OCI-LY7 (cell line): ENCODE measurements at regions of chr5 and their contacts with region 1.

Region 1: GRCh38 chr5:37005946-37006540 is 129.5 kb downstream of the NIPBL start:
- DNase-seq: peak; percentile 43
- H3K4me3 ChIP-seq: no peak overlapping the region
- H3K27ac ChIP-seq: no peak overlapping the region
- H3K4me1 ChIP-seq: no peaks in the 10 kb centered on the region
- CTCF ChIP-seq: peak; percentile 94

Region 2: DNA sequence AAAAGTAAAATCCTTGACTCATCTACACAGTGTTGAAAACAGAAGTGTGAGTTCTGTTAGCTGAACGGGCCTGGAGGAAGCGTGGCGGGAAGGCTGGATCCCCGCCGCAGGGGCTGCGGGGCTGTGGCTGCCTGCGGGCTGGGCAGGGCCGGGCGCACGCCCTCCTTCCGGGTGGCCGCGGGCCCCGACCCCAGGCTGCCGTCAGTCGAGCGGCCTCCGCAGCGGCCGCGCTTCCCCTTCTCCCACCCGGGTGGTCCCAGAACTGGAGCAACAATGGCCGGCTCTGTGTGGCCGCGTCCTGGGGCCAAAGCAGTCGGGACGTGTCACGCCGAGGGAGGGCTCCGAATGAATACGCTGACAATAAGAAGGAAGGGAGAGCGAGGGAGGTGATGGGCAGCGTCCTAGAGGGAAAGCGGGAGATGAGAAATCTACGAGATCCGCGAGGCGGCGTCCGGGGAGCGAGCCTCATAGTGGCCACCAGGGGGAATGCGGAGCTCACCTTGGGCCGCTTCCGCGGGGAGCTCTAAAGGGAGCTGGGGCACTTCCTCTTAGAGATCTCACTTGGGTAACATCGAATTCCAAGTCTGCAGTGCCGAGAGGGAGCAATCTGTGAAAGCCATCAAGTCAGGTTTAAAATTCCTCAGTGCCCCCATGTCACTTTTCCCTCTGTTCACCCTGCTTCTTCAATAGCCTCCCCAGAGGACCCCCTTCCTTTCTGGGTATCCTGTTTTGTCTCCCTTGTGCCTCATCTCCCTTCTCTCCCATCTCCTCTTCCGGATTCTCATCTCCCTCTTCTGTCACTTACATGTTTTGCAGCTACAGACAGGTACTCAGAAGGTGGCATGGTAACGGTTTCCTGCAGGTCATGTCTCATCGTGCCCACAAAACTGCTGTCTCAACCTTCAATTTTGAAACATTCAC is 315.7 kb before region 1 on chr5:
- CTCF ChIA-PET with region 1: no interaction called
- POLR2A ChIA-PET with region 1: no interaction called
- intact Hi-C with region 1: no loop called
- DNase-seq: peak; percentile 70
- H3K4me3 ChIP-seq: peak overlapping the region; percentile 47
- H3K27ac ChIP-seq: no peak overlapping the region
- H3K4me1 ChIP-seq: peaks cover 11% of the 10 kb centered on the region
- CTCF ChIP-seq: peak; percentile 75

Region 3: DNA sequence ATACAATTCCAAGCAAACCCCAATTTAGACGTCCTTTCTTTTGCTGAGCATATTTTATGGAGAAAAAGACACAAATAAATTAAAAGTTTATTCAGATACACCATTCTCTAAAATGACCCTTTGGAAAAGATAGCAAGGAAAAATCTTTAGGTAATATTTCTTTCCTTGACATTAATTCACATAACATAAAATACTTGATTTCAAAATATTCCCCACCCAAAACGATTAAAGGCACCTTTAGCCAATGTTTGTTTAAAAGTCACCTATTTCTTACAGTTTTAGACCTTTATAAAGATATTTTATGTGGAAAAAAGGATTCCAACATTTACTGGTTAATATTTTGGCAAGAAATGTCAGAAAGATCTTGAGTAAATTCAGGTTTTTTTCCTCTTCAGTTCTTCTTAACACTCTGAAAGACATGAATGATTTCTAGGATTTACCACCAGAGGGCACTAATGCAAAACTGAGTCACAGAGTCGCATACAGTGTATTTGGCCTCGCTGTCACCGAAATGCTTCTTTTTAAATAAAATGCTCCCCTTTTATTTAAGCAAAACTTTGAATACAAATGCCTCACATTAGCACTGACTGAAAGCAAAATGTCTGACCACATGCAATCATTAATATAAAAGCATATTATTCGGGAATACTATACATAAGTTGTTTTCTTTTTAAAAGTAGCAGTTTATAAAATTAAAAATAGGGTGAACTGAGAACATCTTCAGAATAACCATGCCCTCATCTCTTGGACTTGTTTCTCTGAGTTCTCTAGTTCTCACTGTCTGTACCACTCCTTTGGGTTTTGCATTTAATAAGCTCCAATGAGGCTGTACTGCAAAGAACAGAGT is 277.1 kb before region 1 on chr5:
- CTCF ChIA-PET with region 1: no interaction called
- POLR2A ChIA-PET with region 1: no interaction called
- intact Hi-C with region 1: loop called (anchors 5 kb)
- DNase-seq: peak; percentile 73
- H3K4me3 ChIP-seq: no peak overlapping the region
- H3K27ac ChIP-seq: no peak overlapping the region
- H3K4me1 ChIP-seq: peaks cover 16% of the 10 kb centered on the region
- CTCF ChIP-seq: peak; percentile 90

Region 4: GRCh38 chr5:36739751-36740221 is 266.3 kb before region 1 on chr5:
- CTCF ChIA-PET with region 1: no interaction called
- POLR2A ChIA-PET with region 1: no interaction called
- intact Hi-C with region 1: loop called (anchors 2 kb)
- DNase-seq: peak; percentile 68
- H3K4me3 ChIP-seq: no peak overlapping the region
- H3K27ac ChIP-seq: no peak overlapping the region
- H3K4me1 ChIP-seq: peaks cover 8% of the 10 kb centered on the region
- CTCF ChIP-seq: peak; percentile 92